Heart left ventricle (tissue), 16 donors: ENCODE measurements at regions of chr17 and their contacts with region 1.

Region 1: GRCh38 chr17:38853292-38854219 is at the start of gene RPL23:
- DNase-seq: peak; percentile 93 to 97 (median 96)
- ATAC-seq: peak; percentile 96 to 98 (median 97)
- H3K4me3 ChIP-seq: peak within 1 kb of the TSS; percentile 48 to 82 (median 70)
- H3K27ac ChIP-seq: peak within 1 kb of the TSS; percentile 82 to 97 (median 93)
- H3K4me1 ChIP-seq: peaks cover 9 to 33% (median 26%) of the 10 kb centered on the region in 12 donors
- H3K27me3 ChIP-seq: no peaks in the 10 kb centered on the region
- CTCF ChIP-seq: no peak
- POLR2A ChIP-seq: peak in 1 of 2 donors; percentile 84
- total RNA-seq, gene RPL23: 698 to 1,018 (median 826) TPM

Region 2: GRCh38 chr17:38752119-38752929 is 101.2 kb before region 1 on chr17 and contains the start of gene PSMB3:
- intact Hi-C with region 1: loop called in 1 of 10 experiments (anchors 5 kb)
- DNase-seq: peak; percentile 96 to 99 (median 98)
- ATAC-seq: peak; percentile 76 to 93 (median 88)
- H3K4me3 ChIP-seq: peak within 1 kb of the TSS; percentile 61 to 99 (median 94)
- H3K27ac ChIP-seq: peak within 1 kb of the TSS; percentile 37 to 99 (median 96)
- H3K4me1 ChIP-seq: peaks cover 0 to 62% (median 38%) of the 10 kb centered on the region in 12 donors
- H3K27me3 ChIP-seq: peaks cover 0 to 24% (median 0%) of the 10 kb centered on the region in 9 donors
- CTCF ChIP-seq: no peak
- POLR2A ChIP-seq: peak in 1 of 2 donors; percentile 51
- total RNA-seq, gene PSMB3: 145 to 305 (median 194) TPM

Region 3: DNA sequence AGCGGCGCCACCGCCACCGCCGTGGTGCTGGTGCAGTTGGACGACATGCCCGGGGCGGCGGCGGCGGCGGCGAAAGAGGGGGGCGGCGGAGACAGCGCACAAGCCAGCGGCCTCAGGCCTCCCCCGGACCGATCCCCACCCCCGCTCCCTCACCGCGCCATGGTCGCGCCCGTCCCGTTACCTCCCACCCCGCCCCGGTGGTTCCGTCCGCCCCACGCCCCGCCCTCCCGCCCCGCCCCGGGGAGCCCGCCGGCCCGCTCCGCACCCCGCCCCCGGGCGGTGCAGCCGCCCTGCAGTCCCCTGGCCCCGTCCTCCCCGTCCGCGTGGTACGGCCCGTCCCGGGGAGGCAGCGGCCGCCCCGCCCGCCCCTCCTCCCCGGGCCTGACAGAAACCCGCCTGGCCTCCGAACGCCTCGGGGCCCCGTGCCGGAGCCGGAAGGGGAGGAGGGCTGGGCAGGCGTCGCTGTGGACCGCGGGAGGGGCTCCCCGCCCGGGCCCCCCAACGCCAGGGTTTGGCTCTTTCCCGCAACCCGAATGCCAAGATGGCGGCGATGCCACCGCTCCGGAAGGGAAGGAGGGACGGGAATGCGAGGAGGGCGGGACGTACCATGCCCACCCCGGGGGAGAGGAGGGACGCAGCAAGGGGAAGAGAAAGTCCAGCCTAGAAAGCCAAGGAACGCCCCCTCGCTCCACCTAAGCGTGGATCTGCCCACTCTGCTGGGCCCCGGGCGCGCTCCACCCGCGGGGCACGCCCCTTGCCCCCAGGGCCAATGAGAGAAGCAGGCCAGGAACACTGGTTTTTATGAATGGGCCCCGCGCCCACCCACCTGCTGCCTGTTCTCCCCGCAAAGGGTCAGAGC is 53.9 kb before region 1 on chr17 and contains the start of gene PIP4K2B:
- intact Hi-C with region 1: loop called in 1 of 10 experiments (anchors 2 kb)
- DNase-seq: peak; percentile 96 to 98 (median 96)
- ATAC-seq: peak; percentile 93 to 97 (median 96)
- H3K4me3 ChIP-seq: peak within 1 kb of the TSS; percentile 65 to 98 (median 82)
- H3K27ac ChIP-seq: peak within 1 kb of the TSS; percentile 89 to 100 (median 99)
- H3K4me1 ChIP-seq: peaks cover 6 to 42% (median 27%) of the 10 kb centered on the region in 12 donors
- H3K27me3 ChIP-seq: no peaks in the 10 kb centered on the region
- CTCF ChIP-seq: no peak
- POLR2A ChIP-seq: peak in 1 of 2 donors; percentile 57
- total RNA-seq, gene PIP4K2B: 39.4 to 55.0 (median 48.5) TPM

Region 4: DNA sequence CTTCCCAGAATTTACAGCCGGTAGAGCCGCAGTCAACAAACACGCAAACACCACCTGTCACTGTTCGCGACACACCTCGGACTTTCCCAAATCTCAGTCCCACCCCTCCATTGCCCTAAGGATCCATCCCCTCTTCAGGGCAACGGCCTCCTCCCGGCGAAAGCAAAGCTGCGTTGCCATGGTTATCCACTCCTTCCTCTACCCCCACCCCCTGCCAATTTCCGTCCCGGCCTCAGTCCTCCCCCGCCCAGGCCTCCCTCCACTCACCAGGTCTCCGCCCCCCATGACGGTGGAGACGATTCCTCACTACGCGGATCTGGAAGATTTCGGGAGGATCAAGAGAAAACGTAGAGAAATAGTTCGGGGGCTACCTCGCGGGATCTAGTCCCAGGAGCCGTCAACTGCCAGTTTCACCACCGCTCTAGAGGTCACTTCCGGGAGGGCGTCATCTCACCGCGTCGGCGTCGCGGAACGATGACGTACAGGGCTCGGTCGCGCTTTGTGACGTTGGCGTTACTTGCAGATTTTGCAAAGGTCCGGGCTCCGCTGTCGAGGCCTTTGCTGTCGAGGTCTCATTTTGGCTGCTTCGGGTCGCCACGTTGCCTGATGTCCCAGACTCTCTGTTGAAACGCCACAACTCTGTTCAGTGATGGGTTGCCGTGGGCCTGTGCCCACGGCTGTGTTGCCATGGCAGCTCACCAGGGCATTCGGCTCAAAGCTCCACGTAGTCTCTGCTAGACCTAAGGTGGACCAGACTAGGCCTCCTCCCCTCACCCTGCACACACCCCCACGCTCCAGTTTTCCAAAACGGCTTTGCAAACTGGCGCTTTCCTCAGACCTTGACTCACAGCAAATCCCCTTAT is 28.4 kb before region 1 on chr17 and contains the start of gene CWC25:
- intact Hi-C with region 1: loop called in 6 of 10 experiments (anchors 1 to 2 kb)
- DNase-seq: peak; percentile 90 to 96 (median 92)
- ATAC-seq: peak; percentile 89 to 95 (median 94)
- H3K4me3 ChIP-seq: peak within 1 kb of the TSS; percentile 58 to 90 (median 79)
- H3K27ac ChIP-seq: peak within 1 kb of the TSS; percentile 87 to 100 (median 97)
- H3K4me1 ChIP-seq: peaks cover 7 to 24% (median 14%) of the 10 kb centered on the region in 12 donors
- H3K27me3 ChIP-seq: no peaks in the 10 kb centered on the region
- CTCF ChIP-seq: no peak
- POLR2A ChIP-seq: peak; percentile 5 to 84
- total RNA-seq, gene CWC25: 6.7 to 11.1 (median 8.3) TPM